ENCODE measurements at regions of chr15 and their contacts with region 1.

Region 1: GRCh38 chr15:38647683-38648082 is 83.1 kb upstream of the RASGRP1 start:
- DNase-seq: no peak
- H3K4me3 ChIP-seq: no peak overlapping the region
- H3K4me3 Mint-ChIP-seq: peak overlapping the region in 2 of 8 donors; percentile 6 to 52
- H3K27ac ChIP-seq: peak overlapping the region; percentile 4
- H3K27ac Mint-ChIP-seq: peak overlapping the region; percentile 70 to 96 (median 91)
- H3K4me1 ChIP-seq: peaks cover 81% of the 10 kb centered on the region
- H3K4me1 Mint-ChIP-seq: peaks cover 55 to 78% (median 68%) of the 10 kb centered on the region in 4 donors
- H3K27me3 ChIP-seq: no peaks in the 10 kb centered on the region
- H3K27me3 Mint-ChIP-seq: no peaks in the 10 kb centered on the region

Region 2: GRCh38 chr15:38576837-38577236 is 70.8 kb before region 1 on chr15:
- CTCF ChIA-PET with region 1: interaction called, 7 read pairs
- POLR2A ChIA-PET with region 1: interaction called, 14 read pairs
- intact Hi-C with region 1: no loop called
- DNase-seq: no peak
- H3K4me3 ChIP-seq: no peak overlapping the region
- H3K4me3 Mint-ChIP-seq: peak overlapping the region in 7 of 8 donors; percentile 29 to 76 (median 64)
- H3K27ac ChIP-seq: peak overlapping the region; percentile 20
- H3K27ac Mint-ChIP-seq: peak overlapping the region in 6 of 7 donors; percentile 0 to 76 (median 48)
- H3K4me1 ChIP-seq: peaks cover 29% of the 10 kb centered on the region
- H3K4me1 Mint-ChIP-seq: peaks cover 18 to 34% (median 27%) of the 10 kb centered on the region in 4 donors
- H3K27me3 ChIP-seq: no peaks in the 10 kb centered on the region
- H3K27me3 Mint-ChIP-seq: no peaks in the 10 kb centered on the region

Region 3: GRCh38 chr15:38624244-38625205 is 23.2 kb before region 1 on chr15:
- CTCF ChIA-PET with region 1: interaction called, 6 read pairs
- POLR2A ChIA-PET with region 1: interaction called, 35 read pairs
- intact Hi-C with region 1: no loop called
- DNase-seq: no peak
- H3K4me3 ChIP-seq: no peak overlapping the region
- H3K4me3 Mint-ChIP-seq: no peak overlapping the region
- H3K27ac ChIP-seq: no peak overlapping the region
- H3K27ac Mint-ChIP-seq: peak overlapping the region in 1 of 7 donors; percentile 36
- H3K4me1 ChIP-seq: peaks cover 5% of the 10 kb centered on the region
- H3K4me1 Mint-ChIP-seq: peaks cover 11 to 18% (median 12%) of the 10 kb centered on the region in 4 donors
- H3K27me3 ChIP-seq: no peaks in the 10 kb centered on the region
- H3K27me3 Mint-ChIP-seq: peaks cover 0 to 2% of the 10 kb centered on the region in 2 donors

Region 4: GRCh38 chr15:38636597-38636996 is 11.1 kb before region 1 on chr15:
- CTCF ChIA-PET with region 1: interaction called, 9 read pairs
- POLR2A ChIA-PET with region 1: interaction called, 35 read pairs
- intact Hi-C with region 1: no loop called
- DNase-seq: no peak
- H3K4me3 ChIP-seq: no peak overlapping the region
- H3K4me3 Mint-ChIP-seq: no peak overlapping the region
- H3K27ac ChIP-seq: no peak overlapping the region
- H3K27ac Mint-ChIP-seq: no peak overlapping the region
- H3K4me1 ChIP-seq: peaks cover 10% of the 10 kb centered on the region
- H3K4me1 Mint-ChIP-seq: peaks cover 13 to 21% (median 15%) of the 10 kb centered on the region in 4 donors
- H3K27me3 ChIP-seq: no peaks in the 10 kb centered on the region
- H3K27me3 Mint-ChIP-seq: no peaks in the 10 kb centered on the region

Region 5: GRCh38 chr15:38671675-38672254 is 24.1 kb after region 1 on chr15:
- CTCF ChIA-PET with region 1: interaction called, 133 read pairs
- POLR2A ChIA-PET with region 1: interaction called, 520 read pairs
- intact Hi-C with region 1: no loop called
- DNase-seq: peak; percentile 70 to 87 (median 78)
- H3K4me3 ChIP-seq: peak overlapping the region; percentile 1 to 24
- H3K4me3 Mint-ChIP-seq: peak overlapping the region in 7 of 8 donors; percentile 67 to 79 (median 72)
- H3K27ac ChIP-seq: peak overlapping the region; percentile 89
- H3K27ac Mint-ChIP-seq: peak overlapping the region; percentile 94 to 100 (median 99)
- H3K4me1 ChIP-seq: peaks cover 83% of the 10 kb centered on the region
- H3K4me1 Mint-ChIP-seq: peaks cover 57 to 79% (median 64%) of the 10 kb centered on the region in 4 donors
- H3K27me3 ChIP-seq: no peaks in the 10 kb centered on the region
- H3K27me3 Mint-ChIP-seq: no peaks in the 10 kb centered on the region

Region 6: GRCh38 chr15:38961931-38962330 is 314.2 kb after region 1 on chr15:
- CTCF ChIA-PET with region 1: no interaction called
- POLR2A ChIA-PET with region 1: no interaction called
- intact Hi-C with region 1: no loop called
- DNase-seq: no peak
- H3K4me3 ChIP-seq: no peak overlapping the region
- H3K4me3 Mint-ChIP-seq: no peak overlapping the region
- H3K27ac ChIP-seq: no peak overlapping the region
- H3K27ac Mint-ChIP-seq: no peak overlapping the region
- H3K4me1 ChIP-seq: no peaks in the 10 kb centered on the region
- H3K4me1 Mint-ChIP-seq: no peaks in the 10 kb centered on the region
- H3K27me3 ChIP-seq: no peaks in the 10 kb centered on the region
- H3K27me3 Mint-ChIP-seq: peaks cover 0 to 4% of the 10 kb centered on the region in 2 donors

Measured in CD4-positive, alpha-beta memory T cell (primary cell).